Activated T-helper 2 cell treated with anti-CD3 and anti-CD28 coated beads, Interferon-gamma antibody, Interleukin-2, Interleukin-4, amounts not matched to agents 10 μg/mL and 5 μg/mL and 100 μg/mL, durations not matched to agents 14 hours and 24 hours and 36 hours (primary cell): ENCODE measurements at regions of chr5 and their contacts with region 1.

Region 1: GRCh38 chr5:41869739-41870626 is at the start of gene OXCT1:
- DNase-seq: peak; percentile 93
- H3K4me3 Mint-ChIP-seq: peak within 1 kb of the TSS; percentile 92
- H3K27ac Mint-ChIP-seq: peak within 1 kb of the TSS; percentile 88
- H3K4me1 Mint-ChIP-seq: peaks cover 54% of the 10 kb centered on the region
- H3K27me3 Mint-ChIP-seq: no peaks in the 10 kb centered on the region
- total RNA-seq, gene OXCT1: 118 and 123 TPM in 2 replicates

Region 2: GRCh38 chr5:41893074-41893851 is 23.3 kb after region 1 on chr5:
- intact Hi-C with region 1: loop called (anchors 2 kb)
- DNase-seq: no peak
- H3K4me3 Mint-ChIP-seq: peak overlapping the region; percentile 37
- H3K27ac Mint-ChIP-seq: no peak overlapping the region
- H3K4me1 Mint-ChIP-seq: peaks cover 26% of the 10 kb centered on the region
- H3K27me3 Mint-ChIP-seq: peaks cover 21% of the 10 kb centered on the region

Region 3: GRCh38 chr5:41924872-41925554 is 55.0 kb after region 1 on chr5 and contains the start of gene FBXO4:
- intact Hi-C with region 1: loop called (anchors 1 kb)
- DNase-seq: peak; percentile 86
- H3K4me3 Mint-ChIP-seq: peak within 1 kb of the TSS; percentile 90
- H3K27ac Mint-ChIP-seq: peak within 1 kb of the TSS; percentile 98
- H3K4me1 Mint-ChIP-seq: peaks cover 17% of the 10 kb centered on the region
- H3K27me3 Mint-ChIP-seq: no peaks in the 10 kb centered on the region
- total RNA-seq, gene FBXO4: 16.1 and 17.2 TPM in 2 replicates

Region 4: GRCh38 chr5:41967852-41968719 is 98.1 kb after region 1 on chr5:
- intact Hi-C with region 1: no loop called
- DNase-seq: no peak
- H3K4me3 Mint-ChIP-seq: no peak overlapping the region
- H3K27ac Mint-ChIP-seq: no peak overlapping the region
- H3K4me1 Mint-ChIP-seq: no peaks in the 10 kb centered on the region
- H3K27me3 Mint-ChIP-seq: no peaks in the 10 kb centered on the region